Left colon (tissue), 2 donors: ENCODE measurements at regions of chr22 and their contacts with region 1.

Region 1: GRCh38 chr22:40346178-40347118 is at the start of gene ADSL:
- DNase-seq: peak; percentile 89 to 93
- ATAC-seq: peak; percentile 88
- total RNA-seq, gene ADSL: 34.2 to 34.9 TPM

Region 2: DNA sequence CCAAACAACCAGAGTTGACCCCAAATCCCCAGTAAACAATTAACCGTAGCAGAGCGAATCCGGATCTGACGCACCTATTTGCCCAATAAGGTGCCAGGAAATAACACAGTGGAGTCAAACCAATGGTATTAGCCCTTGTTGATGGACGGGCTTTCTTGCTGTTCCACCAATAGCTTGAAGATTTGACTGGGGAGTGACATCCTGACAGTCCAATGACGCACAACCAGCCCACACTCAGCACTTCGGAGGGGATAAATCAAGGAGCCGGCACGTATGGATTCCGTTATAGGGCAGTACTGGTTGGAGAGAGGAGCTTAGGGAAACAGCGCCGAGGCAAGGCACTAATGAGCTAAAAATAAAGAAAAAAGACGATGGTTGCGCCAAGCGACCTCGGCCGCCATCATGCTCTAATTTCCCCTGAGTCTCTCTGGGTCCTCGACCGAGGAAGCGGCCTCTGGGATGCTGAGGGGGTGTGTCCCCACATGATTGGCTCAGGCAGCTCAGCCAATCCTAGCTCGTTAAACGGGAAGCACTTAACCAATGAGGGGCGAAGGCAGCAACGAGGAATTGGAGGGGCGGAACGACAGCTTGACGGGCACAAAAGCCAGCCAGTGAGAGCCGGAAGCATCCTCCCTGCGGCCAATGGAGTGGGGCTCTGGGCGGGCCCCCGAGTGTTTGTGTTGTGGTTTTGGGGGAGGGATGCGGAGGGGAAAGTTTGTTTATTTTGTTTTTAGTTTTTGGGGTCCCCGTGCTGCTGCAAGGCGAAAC is 302.2 kb before region 1 on chr22:
- intact Hi-C with region 1: loop called in 1 of 2 experiments (anchors 5 kb)
- DNase-seq: peak; percentile 96 to 98
- ATAC-seq: peak; percentile 90

Region 3: GRCh38 chr22:40220316-40221054 is 126.0 kb before region 1 on chr22:
- intact Hi-C with region 1: no loop called
- DNase-seq: no peak
- ATAC-seq: no peak

Region 4: DNA sequence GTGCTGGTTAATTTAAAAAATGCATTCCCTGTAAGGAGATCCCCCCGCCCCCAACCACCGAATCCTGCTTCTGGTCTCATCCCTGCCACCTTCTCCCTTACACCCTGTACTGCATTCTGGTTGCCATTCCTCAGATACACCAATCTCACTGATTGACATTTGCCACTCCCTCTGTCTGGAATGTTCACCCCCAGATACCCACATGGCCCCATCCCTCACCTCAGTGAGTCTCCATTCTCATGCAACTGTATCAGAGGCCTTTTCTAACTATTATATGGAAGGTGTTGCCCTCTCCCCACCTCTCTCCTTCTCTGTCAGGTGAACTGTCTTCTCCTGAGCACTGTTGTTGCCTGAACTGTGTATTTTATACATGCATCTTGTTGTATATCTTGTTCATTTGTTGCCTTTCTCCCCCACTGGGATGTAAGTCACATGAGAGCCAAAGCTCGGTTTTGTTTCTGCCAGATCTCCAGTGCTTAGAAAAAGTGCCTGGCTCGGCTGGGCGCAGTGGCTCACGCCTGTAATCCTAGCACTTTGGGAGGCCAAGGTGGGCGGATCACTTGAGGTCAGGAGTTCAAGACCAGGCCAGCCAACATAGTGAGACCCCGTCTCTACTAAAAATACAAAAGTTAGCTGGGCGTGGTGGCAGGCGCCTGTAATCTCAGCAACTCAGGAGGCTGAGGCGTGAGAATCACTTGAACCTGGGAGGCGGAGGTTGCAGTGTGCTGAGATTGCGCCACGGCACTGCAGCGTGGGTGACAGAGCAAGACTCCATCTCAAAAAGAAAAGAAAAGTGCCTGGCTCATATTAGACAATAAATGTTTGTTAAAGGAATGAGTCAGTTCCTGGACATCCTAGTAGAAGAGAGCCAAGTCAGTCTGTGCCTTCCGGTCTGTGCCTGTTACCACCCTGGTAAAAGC is 107.8 kb before region 1 on chr22:
- intact Hi-C with region 1: no loop called
- DNase-seq: no peak
- ATAC-seq: no peak

Region 5: GRCh38 chr22:40410317-40410716 is 63.9 kb after region 1 on chr22:
- intact Hi-C with region 1: no loop called
- DNase-seq: no peak
- ATAC-seq: no peak